CD8-positive, alpha-beta T cell (primary cell): ENCODE measurements at regions of chr10 and their contacts with region 1.

Region 1: GRCh38 chr10:97025613-97026242 is 160.0 kb downstream of the SLIT1 start:
- DNase-seq: peak in 8 of 9 experiments; percentile 23 to 69 (median 51)
- ATAC-seq: no peak
- H3K4me3 ChIP-seq: no peak overlapping the region
- H3K4me3 Mint-ChIP-seq: no peak overlapping the region
- H3K27ac ChIP-seq: no peak overlapping the region
- H3K27ac Mint-ChIP-seq: no peak overlapping the region
- H3K4me1 ChIP-seq: no peaks in the 10 kb centered on the region
- H3K4me1 Mint-ChIP-seq: no peaks in the 10 kb centered on the region
- H3K27me3 ChIP-seq: no peaks in the 10 kb centered on the region
- H3K27me3 Mint-ChIP-seq: no peaks in the 10 kb centered on the region
- CTCF ChIP-seq: peak; percentile 67

Region 2: DNA sequence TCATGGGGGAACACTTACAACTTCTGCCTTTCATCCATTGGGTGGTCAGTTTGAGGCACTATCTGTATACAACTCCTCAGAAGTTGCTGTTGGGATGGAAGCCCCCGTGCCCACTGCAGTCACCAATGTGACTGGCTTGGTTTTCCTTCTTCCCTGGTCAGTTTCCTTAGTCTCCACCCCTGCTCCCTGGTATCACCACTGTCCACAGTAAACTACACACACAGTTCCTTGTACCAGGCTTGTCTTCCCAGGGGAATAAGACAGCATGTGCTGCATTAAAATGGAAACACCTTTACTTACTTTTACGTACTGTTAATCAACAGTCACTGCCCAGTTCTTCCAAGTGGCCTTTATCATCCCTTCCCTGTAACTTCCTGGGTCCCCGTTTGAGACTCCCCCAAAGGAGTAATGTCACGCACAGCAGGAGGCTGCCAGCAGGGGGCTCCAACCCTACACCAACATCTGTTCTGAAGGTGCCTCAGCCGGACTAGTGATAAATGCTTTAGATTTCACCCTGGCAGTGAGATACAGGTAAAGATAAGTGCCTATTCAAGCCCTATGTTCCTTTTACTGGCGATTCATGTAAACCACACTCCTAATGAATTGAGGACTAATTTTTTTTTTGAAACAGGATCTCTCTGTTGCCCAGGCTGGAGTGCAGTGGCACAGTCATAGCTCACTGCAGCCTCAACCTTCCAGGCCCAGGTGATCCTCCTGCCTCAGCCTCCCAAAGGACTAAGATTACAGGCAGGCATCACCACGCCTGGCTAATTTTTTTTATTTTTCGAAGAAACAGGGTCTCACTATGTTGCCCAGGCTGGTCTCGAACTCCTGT is 260.1 kb before region 1 on chr10:
- CTCF ChIA-PET with region 1: interaction called, 9 read pairs
- POLR2A ChIA-PET with region 1: no interaction called
- intact Hi-C with region 1: loop called in 1 of 2 experiments (anchors 1 kb)
- DNase-seq: peak; percentile 53 to 83 (median 78)
- ATAC-seq: peak; percentile 94
- H3K4me3 ChIP-seq: no peak overlapping the region
- H3K4me3 Mint-ChIP-seq: no peak overlapping the region
- H3K27ac ChIP-seq: no peak overlapping the region
- H3K27ac Mint-ChIP-seq: no peak overlapping the region
- H3K4me1 ChIP-seq: no peaks in the 10 kb centered on the region
- H3K4me1 Mint-ChIP-seq: no peaks in the 10 kb centered on the region
- H3K27me3 ChIP-seq: no peaks in the 10 kb centered on the region
- H3K27me3 Mint-ChIP-seq: no peaks in the 10 kb centered on the region
- CTCF ChIP-seq: peak; percentile 78

Region 3: GRCh38 chr10:96910488-96911395 is 115.0 kb before region 1 on chr10:
- CTCF ChIA-PET with region 1: interaction called, 9 read pairs
- POLR2A ChIA-PET with region 1: no interaction called
- intact Hi-C with region 1: loop called in 1 of 2 experiments (anchors 5 kb)
- DNase-seq: peak in 3 of 9 experiments; percentile 9 to 65 (median 56)
- ATAC-seq: peak; percentile 66
- H3K4me3 ChIP-seq: no peak overlapping the region
- H3K4me3 Mint-ChIP-seq: no peak overlapping the region
- H3K27ac ChIP-seq: no peak overlapping the region
- H3K27ac Mint-ChIP-seq: no peak overlapping the region
- H3K4me1 ChIP-seq: no peaks in the 10 kb centered on the region
- H3K4me1 Mint-ChIP-seq: peaks cover 33% of the 10 kb centered on the region
- H3K27me3 ChIP-seq: no peaks in the 10 kb centered on the region
- H3K27me3 Mint-ChIP-seq: no peaks in the 10 kb centered on the region
- CTCF ChIP-seq: peak; percentile 88

Region 4: DNA sequence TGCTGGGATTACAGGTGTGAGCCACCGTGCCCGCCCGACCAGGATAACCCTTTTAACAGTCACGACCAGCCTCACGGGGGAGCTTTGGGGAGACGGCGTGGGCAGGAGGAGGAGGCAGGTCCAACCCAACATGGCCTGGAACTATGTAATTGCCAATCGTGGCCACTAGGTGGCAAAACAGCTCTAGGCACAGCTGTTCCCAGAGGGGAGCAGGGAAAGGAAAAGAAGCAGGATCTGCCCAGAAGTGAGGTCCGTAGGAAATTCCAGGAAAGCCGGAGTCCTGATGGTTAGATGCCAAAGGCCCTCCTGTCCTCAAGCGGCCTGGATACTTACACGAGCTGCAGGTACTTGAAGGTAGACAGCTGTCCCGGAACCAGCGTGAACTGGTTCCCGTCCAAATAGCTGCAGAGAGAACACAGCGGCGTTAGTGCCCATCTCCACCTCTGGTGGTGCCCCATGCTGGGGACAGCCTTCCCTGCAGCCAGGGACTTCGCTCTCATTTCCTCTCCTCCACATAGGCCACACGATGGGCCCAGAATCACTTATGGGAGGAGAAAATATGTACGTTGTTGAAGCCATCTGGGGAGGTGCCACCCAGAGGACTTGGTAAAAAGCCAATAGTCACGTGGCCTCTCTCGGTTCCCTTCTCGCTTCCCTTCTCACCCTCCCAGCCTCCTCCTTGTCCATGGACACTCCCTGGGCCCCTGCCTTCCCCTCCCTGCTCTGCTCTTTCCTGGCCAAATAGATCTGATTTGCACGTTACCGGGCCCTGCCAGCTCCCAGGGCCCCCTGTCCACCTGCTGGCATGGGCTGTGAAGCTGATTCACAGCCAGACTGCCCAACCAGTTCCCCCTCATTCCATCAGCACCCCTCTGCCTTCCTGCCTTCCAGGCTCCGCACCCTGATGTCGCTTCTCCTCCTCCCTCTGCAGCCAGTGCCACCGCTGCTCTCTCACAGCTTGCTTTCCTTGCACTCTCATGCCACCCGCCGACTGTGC is 11.9 kb after region 1 on chr10:
- CTCF ChIA-PET with region 1: interaction called, 45 read pairs
- POLR2A ChIA-PET with region 1: no interaction called
- intact Hi-C with region 1: no loop called
- DNase-seq: peak; percentile 35 to 81 (median 67)
- ATAC-seq: peak; percentile 92
- H3K4me3 ChIP-seq: peak overlapping the region; percentile 35 to 44
- H3K4me3 Mint-ChIP-seq: peak overlapping the region; percentile 73
- H3K27ac ChIP-seq: no peak overlapping the region
- H3K27ac Mint-ChIP-seq: no peak overlapping the region
- H3K4me1 ChIP-seq: no peaks in the 10 kb centered on the region
- H3K4me1 Mint-ChIP-seq: peaks cover 8% of the 10 kb centered on the region
- H3K27me3 ChIP-seq: no peaks in the 10 kb centered on the region
- H3K27me3 Mint-ChIP-seq: no peaks in the 10 kb centered on the region
- CTCF ChIP-seq: peak; percentile 92